ENCODE measurements at regions of chr9 and their contacts with region 1.

Region 1: GRCh38 chr9:27726244-27727081 is 153.2 kb upstream of the C9orf72 start:
- DNase-seq: peak in 1 of 2 donors; percentile 51
- H3K4me3 ChIP-seq: no peak overlapping the region
- CTCF ChIP-seq: no peak
- POLR2A ChIP-seq: no peak

Region 2: DNA sequence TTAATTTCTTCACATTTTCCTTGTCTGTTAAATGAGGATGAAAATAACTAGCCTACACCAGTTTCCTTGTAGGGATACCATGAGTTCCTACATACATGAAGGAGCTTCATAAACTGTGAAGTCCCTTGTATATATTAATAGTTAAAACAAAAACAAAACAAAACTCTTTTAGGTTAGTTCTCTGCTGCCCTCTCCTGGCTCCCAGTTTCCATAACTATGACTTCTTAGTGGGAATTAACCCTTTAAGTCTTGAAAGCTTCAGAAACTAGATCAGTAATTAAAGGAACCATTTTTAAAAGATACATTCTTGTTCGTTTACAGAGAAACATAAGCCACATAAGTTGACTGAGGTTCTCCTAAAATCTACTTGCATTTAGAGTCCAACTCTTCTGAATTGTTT is 346.8 kb after region 1 on chr9:
- intact Hi-C with region 1: loop called (anchors 2 kb)
- DNase-seq: no peak
- H3K4me3 ChIP-seq: no peak overlapping the region
- CTCF ChIP-seq: no peak
- POLR2A ChIP-seq: no peak